Right cardiac atrium (tissue), 5 donors: ENCODE measurements at regions of chr17 and their contacts with region 1.

Region 1: GRCh38 chr17:73429440-73430164 is 117.8 kb upstream of the CDC42EP4 start:
- DNase-seq: peak; percentile 91 to 95 (median 95)
- ATAC-seq: peak; percentile 88 to 92
- H3K4me3 ChIP-seq: no peak overlapping the region
- H3K27ac ChIP-seq: no peak overlapping the region
- H3K4me1 ChIP-seq: no peaks in the 10 kb centered on the region
- H3K27me3 ChIP-seq: no peaks in the 10 kb centered on the region

Region 2: DNA sequence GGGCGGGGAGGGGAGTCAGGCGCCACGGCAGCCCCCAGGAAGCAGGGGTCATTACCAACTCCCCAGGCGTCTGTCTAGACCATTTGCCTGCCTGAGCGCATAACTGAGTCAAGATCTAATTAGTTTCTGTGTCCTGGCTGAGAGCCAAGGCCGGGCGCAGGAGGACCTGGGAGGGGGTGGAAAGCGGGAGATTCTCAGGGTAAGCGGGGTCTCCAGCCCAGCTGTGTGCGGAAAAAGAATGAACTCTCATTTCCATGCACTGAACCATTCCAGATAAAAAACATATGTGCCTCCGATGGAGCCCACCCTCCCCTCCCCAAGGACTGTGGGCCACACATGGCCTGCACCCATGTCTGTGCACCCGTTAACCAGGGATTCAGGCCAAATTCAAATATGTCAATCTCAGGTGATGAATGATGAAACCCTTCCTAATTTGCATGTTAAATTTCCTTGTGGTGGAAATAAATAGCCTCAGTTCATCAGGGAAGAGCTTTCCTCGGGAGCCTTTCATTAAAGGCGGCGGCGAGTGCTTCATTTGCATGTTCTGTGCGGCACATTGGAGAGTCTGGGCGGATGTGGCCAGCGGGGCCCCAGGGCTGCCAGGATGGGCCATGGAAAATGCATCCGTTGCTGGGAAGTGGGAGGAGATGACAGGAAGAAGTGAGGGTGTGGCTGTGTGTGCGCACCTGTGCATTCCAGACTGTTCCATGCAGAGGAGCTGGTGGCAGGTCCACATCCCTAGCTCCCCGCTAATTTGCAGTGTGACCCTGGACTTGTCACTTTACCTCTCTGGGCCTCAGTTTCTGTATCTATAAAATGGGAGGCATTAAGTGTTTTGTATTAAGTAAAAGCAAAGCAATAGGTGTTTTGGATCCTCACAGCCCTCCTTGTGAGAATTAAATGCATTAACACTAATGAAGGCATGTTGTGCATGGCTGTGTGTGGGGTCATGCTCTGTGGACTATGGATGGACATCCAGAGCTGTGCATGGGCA is 63.5 kb after region 1 on chr17:
- intact Hi-C with region 1: no loop called
- DNase-seq: no peak
- ATAC-seq: no peak
- H3K4me3 ChIP-seq: no peak overlapping the region
- H3K27ac ChIP-seq: no peak overlapping the region
- H3K4me1 ChIP-seq: no peaks in the 10 kb centered on the region
- H3K27me3 ChIP-seq: no peaks in the 10 kb centered on the region

Region 3: GRCh38 chr17:73645050-73645978 is 215.7 kb after region 1 on chr17:
- intact Hi-C with region 1: loop called in 3 of 4 experiments (anchors 5 to 10 kb)
- DNase-seq: peak; percentile 70 to 85 (median 82)
- ATAC-seq: peak; percentile 75 to 80
- H3K4me3 ChIP-seq: peak overlapping the region; percentile 62
- H3K27ac ChIP-seq: no peak overlapping the region
- H3K4me1 ChIP-seq: no peaks in the 10 kb centered on the region
- H3K27me3 ChIP-seq: no peaks in the 10 kb centered on the region

Region 4: DNA sequence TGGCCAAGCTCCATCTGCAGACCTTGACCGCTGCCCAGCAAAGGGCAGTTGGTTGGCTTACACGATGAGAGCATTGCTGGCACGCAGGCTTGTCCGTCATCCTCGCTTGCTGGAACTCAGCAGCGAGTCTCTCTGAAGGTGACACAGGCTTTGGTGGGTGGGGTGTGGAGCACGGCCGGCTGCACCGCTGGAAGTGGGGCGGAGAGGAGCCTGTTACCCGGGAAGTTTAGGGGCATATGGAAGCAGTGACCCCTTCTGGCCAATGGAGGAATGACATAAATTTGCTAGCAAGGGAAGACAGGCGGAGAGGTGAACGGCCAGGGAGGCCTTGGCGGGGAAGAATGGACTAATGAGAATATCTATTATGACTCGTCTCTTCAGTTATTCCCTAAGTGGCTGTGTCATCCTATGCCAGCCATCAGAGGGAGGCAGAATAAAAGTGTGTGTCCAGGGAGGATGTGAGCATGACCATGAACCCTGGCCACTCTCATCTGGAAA is 280.5 kb after region 1 on chr17:
- intact Hi-C with region 1: loop called (anchors 2 to 10 kb)
- DNase-seq: peak; percentile 63 to 79 (median 77)
- ATAC-seq: peak; percentile 87 to 92
- H3K4me3 ChIP-seq: no peak overlapping the region
- H3K27ac ChIP-seq: no peak overlapping the region
- H3K4me1 ChIP-seq: no peaks in the 10 kb centered on the region
- H3K27me3 ChIP-seq: no peaks in the 10 kb centered on the region

Region 5: GRCh38 chr17:74176546-74177001 is 747.0 kb after region 1 on chr17:
- intact Hi-C with region 1: loop called in 3 of 4 experiments (anchors 2 to 5 kb)
- DNase-seq: peak; percentile 37 to 74 (median 73)
- ATAC-seq: peak; percentile 83 to 86
- H3K4me3 ChIP-seq: no peak overlapping the region
- H3K27ac ChIP-seq: no peak overlapping the region
- H3K4me1 ChIP-seq: no peaks in the 10 kb centered on the region
- H3K27me3 ChIP-seq: no peaks in the 10 kb centered on the region